B cell (primary cell): ENCODE measurements at regions of chr3 and their contacts with region 1.

Region 1: DNA sequence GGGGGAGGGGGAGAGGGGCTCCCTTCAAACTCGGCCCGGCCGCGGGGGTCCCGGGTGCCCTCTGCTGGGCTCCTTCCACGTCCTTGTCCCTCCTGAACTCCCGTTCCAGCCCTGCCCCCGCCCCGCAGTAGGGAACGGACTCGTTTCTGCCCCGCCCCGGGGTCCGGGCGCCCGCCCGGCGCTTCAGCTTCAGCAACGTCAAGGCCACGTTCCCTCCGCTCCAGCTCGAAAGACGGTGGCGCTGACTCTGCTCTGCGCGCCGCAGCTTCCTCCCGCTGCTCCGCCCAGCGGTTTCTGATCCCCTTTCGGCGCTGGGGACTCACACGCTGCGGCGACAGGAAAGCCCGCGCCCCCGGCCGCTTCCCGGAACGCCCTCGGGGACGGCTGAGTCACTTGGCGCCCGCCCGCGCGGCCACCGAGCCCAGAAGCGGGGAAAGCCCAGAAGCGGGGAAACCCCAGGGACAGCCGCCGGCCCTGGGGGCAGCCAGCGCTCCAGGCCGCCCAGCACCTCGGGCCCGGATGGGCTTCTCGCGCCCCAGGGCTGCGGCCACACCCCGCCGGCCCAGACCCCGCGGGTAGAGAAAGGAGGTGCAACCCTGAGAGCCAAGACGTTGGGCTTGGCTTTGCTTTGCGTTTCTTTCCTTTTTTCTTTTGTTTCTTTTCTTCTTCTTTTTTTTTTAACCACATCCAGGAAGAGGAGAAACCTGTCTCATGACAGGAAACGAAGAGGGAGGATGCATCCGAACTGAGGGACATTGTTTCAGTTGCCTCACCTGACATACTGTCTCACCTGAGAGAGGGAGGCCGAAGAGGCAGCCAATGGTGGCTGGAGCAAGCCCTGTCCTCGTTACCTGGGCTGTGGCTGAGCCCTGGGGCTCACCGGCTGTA is 28.9 kb downstream of the ARHGAP31 start:
- DNase-seq: peak; percentile 97
- ATAC-seq: peak; percentile 86
- H3K4me3 ChIP-seq: peak overlapping the region; percentile 44 to 86 (median 61)
- H3K4me3 Mint-ChIP-seq: peak overlapping the region; percentile 88
- H3K27ac ChIP-seq: peak overlapping the region; percentile 86 to 87
- H3K27ac Mint-ChIP-seq: peak overlapping the region; percentile 93
- H3K4me1 ChIP-seq: peaks cover 13 to 22% of the 10 kb centered on the region in 2 donors
- H3K4me1 Mint-ChIP-seq: peaks cover 48% of the 10 kb centered on the region
- H3K27me3 ChIP-seq: no peaks in the 10 kb centered on the region
- H3K27me3 Mint-ChIP-seq: no peaks in the 10 kb centered on the region
- CTCF ChIP-seq: no peak

Region 2: DNA sequence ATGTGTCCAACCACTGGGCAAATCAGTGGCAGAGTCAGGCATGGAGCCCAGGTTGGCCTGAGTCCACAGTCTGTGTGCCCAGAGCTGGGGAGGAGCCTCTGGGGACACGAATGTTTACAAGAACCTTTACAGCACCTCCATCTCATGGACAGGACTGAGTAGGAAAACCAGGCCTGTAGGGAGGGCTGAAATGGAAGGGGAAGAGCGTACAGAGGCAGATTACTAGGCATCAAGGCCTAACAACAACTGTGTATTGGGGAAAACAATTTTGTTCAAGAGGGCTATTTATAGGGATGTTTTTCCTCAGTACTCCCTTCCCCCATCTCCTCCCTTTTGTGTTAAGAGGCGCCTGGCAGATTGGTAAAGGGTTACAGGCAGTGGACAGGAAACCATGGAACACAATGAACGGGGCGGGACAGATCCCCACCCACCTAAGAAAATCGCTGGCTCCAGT is 44.0 kb before region 1 on chr3:
- CTCF ChIA-PET with region 1: no interaction called
- POLR2A ChIA-PET with region 1: no interaction called
- intact Hi-C with region 1: loop called (anchors 5 kb)
- DNase-seq: no peak
- ATAC-seq: no peak
- H3K4me3 ChIP-seq: no peak overlapping the region
- H3K4me3 Mint-ChIP-seq: no peak overlapping the region
- H3K27ac ChIP-seq: no peak overlapping the region
- H3K27ac Mint-ChIP-seq: no peak overlapping the region
- H3K4me1 ChIP-seq: no peaks in the 10 kb centered on the region
- H3K4me1 Mint-ChIP-seq: no peaks in the 10 kb centered on the region
- H3K27me3 ChIP-seq: no peaks in the 10 kb centered on the region
- H3K27me3 Mint-ChIP-seq: no peaks in the 10 kb centered on the region
- CTCF ChIP-seq: no peak

Region 3: GRCh38 chr3:119293871-119294695 is 29.0 kb before region 1 on chr3 and contains the start of gene ARHGAP31:
- CTCF ChIA-PET with region 1: interaction called, 5 read pairs
- POLR2A ChIA-PET with region 1: interaction called, 21 read pairs
- intact Hi-C with region 1: loop called (anchors 1 kb)
- DNase-seq: peak; percentile 89
- ATAC-seq: peak; percentile 76
- H3K4me3 ChIP-seq: peak within 1 kb of the TSS; percentile 61 to 89 (median 80)
- H3K4me3 Mint-ChIP-seq: peak within 1 kb of the TSS; percentile 87
- H3K27ac ChIP-seq: peak within 1 kb of the TSS; percentile 91 to 96
- H3K27ac Mint-ChIP-seq: peak within 1 kb of the TSS; percentile 91
- H3K4me1 ChIP-seq: peaks cover 30 to 46% of the 10 kb centered on the region in 2 donors
- H3K4me1 Mint-ChIP-seq: peaks cover 58% of the 10 kb centered on the region
- H3K27me3 ChIP-seq: peaks cover 0 to 7% (median 0%) of the 10 kb centered on the region in 4 experiments
- H3K27me3 Mint-ChIP-seq: no peaks in the 10 kb centered on the region
- CTCF ChIP-seq: no peak
- total RNA-seq, gene ARHGAP31: 7.8 and 8.3 TPM in 2 replicates

Region 4: DNA sequence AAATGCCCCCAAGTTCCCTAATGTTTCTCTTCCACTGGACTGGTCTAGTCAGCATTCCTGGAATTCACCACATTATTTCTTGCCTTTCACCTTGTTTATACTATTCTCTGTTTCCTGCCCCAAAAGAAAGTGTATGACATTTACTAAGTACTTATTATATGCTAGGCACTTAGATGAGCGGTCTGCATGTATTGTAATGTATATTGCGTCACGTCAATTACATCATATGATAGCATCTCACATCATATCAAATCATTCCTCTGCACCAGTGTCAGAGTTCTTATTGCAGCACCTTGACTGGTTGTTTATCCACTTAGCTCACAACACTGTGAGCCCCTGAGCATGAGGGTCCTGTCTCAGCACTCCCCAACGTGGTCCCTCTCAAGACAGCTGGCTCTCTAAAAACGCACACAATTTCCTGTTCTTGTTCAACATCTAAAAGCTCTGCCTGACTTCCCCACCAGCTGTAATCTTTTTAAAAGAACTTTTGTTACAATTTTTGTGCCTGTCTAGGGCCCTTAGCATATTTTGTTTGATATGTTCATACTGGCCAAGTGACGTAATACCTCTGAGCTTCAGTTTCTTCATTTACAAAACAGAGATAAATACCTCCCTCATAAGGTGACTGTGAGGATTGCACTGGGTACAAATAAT is 29.9 kb after region 1 on chr3:
- CTCF ChIA-PET with region 1: interaction called, 7 read pairs
- POLR2A ChIA-PET with region 1: interaction called, 3 read pairs
- intact Hi-C with region 1: loop called (anchors 1 kb)
- DNase-seq: peak; percentile 63
- ATAC-seq: peak; percentile 35
- H3K4me3 ChIP-seq: no peak overlapping the region
- H3K4me3 Mint-ChIP-seq: peak overlapping the region; percentile 46
- H3K27ac ChIP-seq: peak overlapping the region in 1 of 2 donors; percentile 56
- H3K27ac Mint-ChIP-seq: peak overlapping the region; percentile 51
- H3K4me1 ChIP-seq: peaks cover 22 to 29% of the 10 kb centered on the region in 2 donors
- H3K4me1 Mint-ChIP-seq: peaks cover 36% of the 10 kb centered on the region
- H3K27me3 ChIP-seq: no peaks in the 10 kb centered on the region
- H3K27me3 Mint-ChIP-seq: no peaks in the 10 kb centered on the region
- CTCF ChIP-seq: peak; percentile 61

Region 5: GRCh38 chr3:119388577-119388976 is 65.5 kb after region 1 on chr3:
- CTCF ChIA-PET with region 1: no interaction called
- POLR2A ChIA-PET with region 1: no interaction called
- intact Hi-C with region 1: no loop called
- DNase-seq: no peak
- ATAC-seq: no peak
- H3K4me3 ChIP-seq: no peak overlapping the region
- H3K4me3 Mint-ChIP-seq: no peak overlapping the region
- H3K27ac ChIP-seq: no peak overlapping the region
- H3K27ac Mint-ChIP-seq: no peak overlapping the region
- H3K4me1 ChIP-seq: no peaks in the 10 kb centered on the region
- H3K4me1 Mint-ChIP-seq: no peaks in the 10 kb centered on the region
- H3K27me3 ChIP-seq: no peaks in the 10 kb centered on the region
- H3K27me3 Mint-ChIP-seq: no peaks in the 10 kb centered on the region
- CTCF ChIP-seq: no peak

Region 6: DNA sequence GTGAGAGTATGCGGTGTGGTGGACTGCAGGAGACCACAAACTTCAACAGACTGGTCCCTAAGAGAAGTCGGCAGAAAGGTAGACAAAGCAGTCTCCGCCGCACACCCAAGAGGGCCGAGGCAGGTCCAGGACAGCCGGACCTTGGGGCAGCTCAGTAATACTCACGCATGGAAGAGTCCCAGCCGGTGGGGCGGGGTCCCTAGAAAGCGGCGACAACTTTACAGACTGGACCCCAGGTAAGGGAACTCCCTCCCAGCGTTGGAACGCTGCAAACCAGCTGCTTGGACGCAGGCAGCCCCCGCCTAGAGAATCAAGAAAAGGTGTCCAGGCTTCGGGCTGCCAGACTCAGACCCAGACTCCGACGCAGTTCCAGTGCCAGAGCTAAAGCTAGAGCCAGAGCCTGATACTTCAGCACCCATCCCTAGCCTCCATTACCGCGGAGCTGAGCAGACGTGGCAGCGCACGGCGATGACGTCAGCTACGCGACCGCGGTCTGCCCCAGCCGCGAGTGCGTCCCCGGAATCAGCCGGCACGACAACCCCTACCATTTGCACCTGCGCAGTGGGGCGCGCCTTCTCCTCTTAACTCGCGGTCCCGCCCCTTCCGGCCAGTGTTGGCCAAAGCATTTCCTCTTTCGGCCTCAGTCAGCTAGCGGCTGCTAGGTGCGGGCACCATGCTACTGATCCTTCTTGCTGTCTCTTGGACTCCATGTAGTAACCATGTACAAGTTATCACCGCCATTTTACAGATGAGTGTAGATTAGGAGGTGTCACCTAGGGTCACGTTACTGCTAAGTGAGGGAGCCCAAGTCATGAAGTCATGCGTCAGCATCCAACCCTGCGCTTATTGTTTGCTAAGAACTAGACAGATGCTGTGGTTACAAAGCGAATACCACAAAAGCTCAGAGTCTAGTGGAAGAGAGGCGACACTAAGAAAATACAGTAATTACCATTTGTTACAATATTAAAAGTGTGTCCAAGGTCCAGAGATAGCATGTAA is 140.4 kb after region 1 on chr3 and contains the start of gene TMEM39A:
- CTCF ChIA-PET with region 1: no interaction called
- POLR2A ChIA-PET with region 1: interaction called, 5 read pairs
- intact Hi-C with region 1: loop called (anchors 1 kb)
- DNase-seq: peak; percentile 99
- ATAC-seq: peak; percentile 87
- H3K4me3 ChIP-seq: peak within 1 kb of the TSS; percentile 76 to 99 (median 85)
- H3K4me3 Mint-ChIP-seq: peak within 1 kb of the TSS; percentile 96
- H3K27ac ChIP-seq: peak within 1 kb of the TSS; percentile 68 to 88
- H3K27ac Mint-ChIP-seq: peak within 1 kb of the TSS; percentile 99
- H3K4me1 ChIP-seq: peaks cover 24 to 25% of the 10 kb centered on the region in 2 donors
- H3K4me1 Mint-ChIP-seq: peaks cover 37% of the 10 kb centered on the region
- H3K27me3 ChIP-seq: no peaks in the 10 kb centered on the region
- H3K27me3 Mint-ChIP-seq: no peaks in the 10 kb centered on the region
- CTCF ChIP-seq: no peak
- total RNA-seq, gene TMEM39A: 39.9 and 50.3 TPM in 2 replicates

Region 7: DNA sequence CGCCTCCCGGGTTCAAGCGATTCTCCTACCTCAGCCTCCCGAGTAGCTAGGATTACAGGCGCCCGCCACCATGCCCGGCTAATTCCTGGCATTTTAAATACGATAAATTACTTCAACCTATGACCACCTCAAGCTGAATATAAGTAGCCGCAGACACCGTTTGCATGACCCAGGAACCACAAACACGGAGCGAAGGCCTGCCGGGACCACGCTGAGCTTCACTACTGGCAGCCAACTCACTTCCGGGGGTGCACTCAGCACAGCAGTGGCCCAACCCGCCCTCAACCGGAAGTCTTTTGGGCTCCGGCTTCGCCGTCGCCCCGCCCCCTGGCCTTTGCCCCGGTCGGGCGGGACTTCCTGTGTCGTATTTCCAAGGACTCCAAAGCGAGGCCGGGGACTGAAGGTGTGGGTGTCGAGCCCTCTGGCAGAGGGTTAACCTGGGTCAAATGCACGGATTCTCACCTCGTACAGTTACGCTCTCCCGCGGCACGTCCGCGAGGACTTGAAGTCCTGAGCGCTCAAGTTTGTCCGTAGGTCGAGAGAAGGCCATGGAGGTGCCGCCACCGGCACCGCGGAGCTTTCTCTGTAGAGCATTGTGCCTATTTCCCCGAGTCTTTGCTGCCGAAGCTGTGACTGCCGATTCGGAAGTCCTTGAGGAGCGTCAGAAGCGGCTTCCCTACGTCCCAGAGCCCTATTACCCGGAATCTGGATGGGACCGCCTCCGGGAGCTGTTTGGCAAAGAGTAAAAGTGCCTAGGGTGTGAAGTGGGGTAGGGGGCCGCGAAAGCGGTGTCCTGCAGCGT is 175.3 kb after region 1 on chr3 and contains the start of gene TIMMDC1:
- CTCF ChIA-PET with region 1: no interaction called
- POLR2A ChIA-PET with region 1: no interaction called
- intact Hi-C with region 1: loop called (anchors 1 kb)
- DNase-seq: peak; percentile 97
- ATAC-seq: peak; percentile 99
- H3K4me3 ChIP-seq: peak within 1 kb of the TSS; percentile 86 to 98 (median 94)
- H3K4me3 Mint-ChIP-seq: peak within 1 kb of the TSS; percentile 100
- H3K27ac ChIP-seq: peak within 1 kb of the TSS; percentile 82 to 91
- H3K27ac Mint-ChIP-seq: peak within 1 kb of the TSS; percentile 98
- H3K4me1 ChIP-seq: peaks cover 16 to 18% of the 10 kb centered on the region in 2 donors
- H3K4me1 Mint-ChIP-seq: peaks cover 26% of the 10 kb centered on the region
- H3K27me3 ChIP-seq: no peaks in the 10 kb centered on the region
- H3K27me3 Mint-ChIP-seq: no peaks in the 10 kb centered on the region
- CTCF ChIP-seq: no peak
- total RNA-seq, gene TIMMDC1: 58.5 and 70.9 TPM in 2 replicates